Mammary epithelial cell (primary cell): ENCODE measurements at regions of chr11 and their contacts with region 1.

Region 1: GRCh38 chr11:62627714-62628113 is 5.9 kb upstream of the B3GAT3 start:
- DNase-seq: no peak
- H3K4me3 ChIP-seq: no peak overlapping the region
- H3K27ac ChIP-seq: no peak overlapping the region
- H3K4me1 ChIP-seq: no peaks in the 10 kb centered on the region
- H3K27me3 ChIP-seq: no peaks in the 10 kb centered on the region
- CTCF ChIP-seq: peak in 1 of 2 donors; percentile 23

Region 2: DNA sequence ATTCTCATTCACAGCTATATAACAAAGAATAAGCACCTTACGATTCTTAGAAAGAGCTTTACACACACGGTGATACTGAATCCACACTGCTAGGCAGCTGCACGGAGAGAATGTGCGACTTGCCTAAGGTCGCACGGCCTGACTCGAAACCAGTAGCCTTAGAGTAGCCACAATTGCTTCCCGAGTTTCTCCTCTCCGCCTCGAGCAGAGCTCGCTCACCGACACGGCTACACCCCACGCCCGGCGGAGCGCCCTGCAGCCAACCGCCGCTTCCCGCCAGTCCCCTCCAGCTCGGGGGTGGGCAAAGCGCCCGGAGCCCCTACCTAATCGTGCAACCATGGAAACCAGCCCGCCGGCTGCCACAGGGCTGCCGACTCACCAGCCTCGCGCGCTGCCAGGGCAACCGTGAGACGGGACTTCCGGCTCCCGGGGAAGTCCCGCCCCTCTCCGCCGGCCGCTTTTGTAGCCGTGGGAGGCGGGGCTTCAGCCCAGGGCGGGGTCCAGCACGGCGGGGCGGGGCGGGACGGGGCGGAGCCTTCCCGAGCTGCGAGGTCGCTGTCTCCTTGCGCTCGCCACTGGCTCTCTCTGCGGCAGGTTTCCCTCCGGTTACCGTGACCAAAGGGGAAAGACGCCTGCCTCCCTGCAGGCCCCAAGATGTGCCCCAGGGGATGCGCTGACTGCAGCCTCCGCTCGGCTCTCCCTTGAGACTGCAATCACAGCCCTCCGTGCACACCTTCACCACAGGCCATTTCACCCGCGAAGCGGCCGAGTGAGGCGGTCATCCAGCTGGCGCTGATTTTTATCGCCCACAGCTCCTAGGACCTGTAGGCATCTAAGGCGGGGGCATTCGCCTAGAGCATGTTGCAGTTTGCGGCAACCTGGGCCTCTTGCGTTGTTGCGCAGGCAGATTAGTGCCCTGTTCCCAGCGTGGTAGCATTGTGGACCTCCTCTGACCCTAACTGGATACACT is 78.5 kb after region 1 on chr11:
- CTCF ChIA-PET with region 1: no interaction called
- dilution Hi-C with region 1: loop called (anchors 5 kb)
- in situ Hi-C with region 1: no loop called
- intact Hi-C with region 1: no loop called
- DNase-seq: peak; percentile 91
- H3K4me3 ChIP-seq: peak overlapping the region; percentile 70 to 89 (median 85)
- H3K27ac ChIP-seq: peak overlapping the region; percentile 98
- H3K4me1 ChIP-seq: peaks cover 31% of the 10 kb centered on the region
- H3K27me3 ChIP-seq: no peaks in the 10 kb centered on the region
- CTCF ChIP-seq: no peak

Region 3: DNA sequence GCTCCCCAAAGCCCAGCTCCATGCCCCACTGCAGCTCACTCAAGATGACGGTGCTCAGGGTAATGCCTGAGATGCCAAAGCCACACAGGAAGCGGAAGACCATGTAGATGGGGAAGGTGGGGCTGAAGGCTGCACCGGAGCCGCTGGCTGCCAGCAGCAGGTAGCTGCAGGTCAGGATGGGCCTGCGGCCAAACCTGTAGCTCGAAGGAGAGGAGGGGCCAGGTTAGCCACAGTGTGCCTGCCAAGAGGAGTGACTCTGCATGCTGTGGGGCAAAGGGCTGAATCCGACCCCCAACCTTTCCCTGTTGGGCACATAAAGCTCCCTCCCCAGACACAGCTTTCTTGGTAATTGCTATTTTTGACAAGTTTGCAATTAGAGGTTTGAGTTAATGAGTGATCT is 371.9 kb after region 1 on chr11:
- CTCF ChIA-PET with region 1: no interaction called
- dilution Hi-C with region 1: loop called (anchors 10 kb)
- in situ Hi-C with region 1: no loop called
- intact Hi-C with region 1: no loop called
- DNase-seq: peak; percentile 33
- H3K4me3 ChIP-seq: no peak overlapping the region
- H3K27ac ChIP-seq: no peak overlapping the region
- H3K4me1 ChIP-seq: no peaks in the 10 kb centered on the region
- H3K27me3 ChIP-seq: no peaks in the 10 kb centered on the region
- CTCF ChIP-seq: no peak